Activated naive CD4-positive, alpha-beta T cell treated with anti-CD3 and anti-CD28 coated beads for 36 hours (primary cell): ENCODE measurements at regions of chr3 and their contacts with region 1.

Region 1: GRCh38 chr3:106206146-106206545 is 337.3 kb upstream of the CBLB start:
- DNase-seq: peak; percentile 47
- H3K4me3 Mint-ChIP-seq: peak overlapping the region; percentile 55
- H3K27ac Mint-ChIP-seq: peak overlapping the region; percentile 98
- H3K4me1 Mint-ChIP-seq: peaks cover 55% of the 10 kb centered on the region
- H3K27me3 Mint-ChIP-seq: no peaks in the 10 kb centered on the region

Region 2: DNA sequence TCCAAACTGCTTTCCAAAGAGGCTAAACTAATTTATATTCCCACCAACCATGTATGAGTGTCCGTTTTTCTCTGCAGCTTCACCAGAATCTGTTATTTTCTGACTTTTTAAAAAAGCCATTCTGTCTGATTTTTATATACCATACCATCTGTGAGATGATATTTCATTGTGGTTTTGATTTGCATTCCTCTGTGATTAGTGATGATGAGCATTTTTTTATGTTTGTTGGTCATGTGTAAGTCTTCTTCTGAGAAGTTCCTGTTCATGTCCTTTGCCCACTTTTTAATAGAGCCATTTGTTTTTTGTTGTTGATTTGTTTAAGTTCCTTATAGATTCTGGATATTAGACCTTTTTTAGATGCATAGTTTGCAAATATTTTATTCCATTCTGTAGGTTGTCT is 1018.8 kb before region 1 on chr3:
- CTCF ChIA-PET with region 1: no interaction called
- intact Hi-C with region 1: no loop called
- DNase-seq: no peak
- H3K4me3 Mint-ChIP-seq: no peak overlapping the region
- H3K27ac Mint-ChIP-seq: no peak overlapping the region
- H3K4me1 Mint-ChIP-seq: no peaks in the 10 kb centered on the region
- H3K27me3 Mint-ChIP-seq: no peaks in the 10 kb centered on the region

Region 3: GRCh38 chr3:105676621-105677300 is 529.4 kb before region 1 on chr3:
- CTCF ChIA-PET with region 1: no interaction called
- intact Hi-C with region 1: loop called (anchors 2 kb)
- DNase-seq: peak; percentile 77
- H3K4me3 Mint-ChIP-seq: no peak overlapping the region
- H3K27ac Mint-ChIP-seq: peak overlapping the region; percentile 87
- H3K4me1 Mint-ChIP-seq: peaks cover 18% of the 10 kb centered on the region
- H3K27me3 Mint-ChIP-seq: no peaks in the 10 kb centered on the region

Region 4: DNA sequence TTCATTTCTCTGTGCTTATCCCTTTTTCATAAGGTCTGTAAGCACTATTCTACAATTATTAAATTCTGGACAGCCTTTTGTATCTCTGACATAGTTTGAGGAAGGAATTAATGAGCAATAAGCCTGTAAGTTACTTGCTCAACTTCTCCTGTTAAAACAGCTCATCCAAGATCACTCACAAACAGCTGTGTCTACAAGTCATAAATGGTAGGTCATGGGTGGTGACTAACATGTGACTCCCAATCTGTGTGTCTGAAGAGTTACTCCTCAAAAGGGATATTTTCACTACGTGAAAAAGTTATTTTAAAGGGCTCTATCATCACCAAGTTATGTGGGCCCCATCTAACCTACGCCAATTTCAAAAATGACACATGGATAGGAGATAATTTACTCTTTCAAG is 192.2 kb before region 1 on chr3:
- CTCF ChIA-PET with region 1: no interaction called
- intact Hi-C with region 1: loop called (anchors 2 kb)
- DNase-seq: no peak
- H3K4me3 Mint-ChIP-seq: no peak overlapping the region
- H3K27ac Mint-ChIP-seq: peak overlapping the region; percentile 37
- H3K4me1 Mint-ChIP-seq: peaks cover 49% of the 10 kb centered on the region
- H3K27me3 Mint-ChIP-seq: no peaks in the 10 kb centered on the region

Region 5: GRCh38 chr3:106161246-106161645 is 44.9 kb before region 1 on chr3:
- CTCF ChIA-PET with region 1: no interaction called
- intact Hi-C with region 1: no loop called
- DNase-seq: no peak
- H3K4me3 Mint-ChIP-seq: no peak overlapping the region
- H3K27ac Mint-ChIP-seq: no peak overlapping the region
- H3K4me1 Mint-ChIP-seq: no peaks in the 10 kb centered on the region
- H3K27me3 Mint-ChIP-seq: no peaks in the 10 kb centered on the region

Region 6: GRCh38 chr3:106232956-106233355 is 26.8 kb after region 1 on chr3:
- CTCF ChIA-PET with region 1: no interaction called
- intact Hi-C with region 1: loop called (anchors 1 kb)
- DNase-seq: no peak
- H3K4me3 Mint-ChIP-seq: no peak overlapping the region
- H3K27ac Mint-ChIP-seq: peak overlapping the region; percentile 86
- H3K4me1 Mint-ChIP-seq: peaks cover 56% of the 10 kb centered on the region
- H3K27me3 Mint-ChIP-seq: no peaks in the 10 kb centered on the region

Region 7: GRCh38 chr3:106428565-106428994 is 222.4 kb after region 1 on chr3:
- CTCF ChIA-PET with region 1: no interaction called
- intact Hi-C with region 1: loop called (anchors 2 kb)
- DNase-seq: peak; percentile 66
- H3K4me3 Mint-ChIP-seq: no peak overlapping the region
- H3K27ac Mint-ChIP-seq: peak overlapping the region; percentile 81
- H3K4me1 Mint-ChIP-seq: peaks cover 46% of the 10 kb centered on the region
- H3K27me3 Mint-ChIP-seq: no peaks in the 10 kb centered on the region